Left cardiac atrium (tissue), 4 donors: ENCODE measurements at regions of chr6 and their contacts with region 1.

Region 1: GRCh38 chr6:117194978-117195377 is 70.4 kb upstream of the VGLL2 start:
- DNase-seq: no peak
- ATAC-seq: no peak

Region 2: DNA sequence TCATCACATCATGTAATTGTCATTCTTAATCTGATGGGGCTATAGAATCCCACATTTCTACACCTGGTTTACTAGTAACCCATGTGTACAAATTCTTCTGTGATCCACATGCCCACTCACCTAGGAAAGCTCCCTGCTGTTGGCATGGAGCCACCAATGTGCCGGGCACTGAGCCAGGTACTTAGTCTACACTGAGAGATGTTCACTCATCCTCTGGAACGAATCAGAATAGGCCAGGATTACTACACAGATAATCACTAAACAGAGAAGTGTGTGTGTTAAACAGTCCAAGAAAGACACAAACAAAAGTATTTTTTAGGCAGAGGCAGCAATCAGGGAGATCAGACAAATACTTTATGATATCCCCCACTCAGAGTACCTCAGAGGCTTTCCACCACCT is 122.8 kb before region 1 on chr6:
- intact Hi-C with region 1: loop called in 1 of 2 experiments (anchors 10 kb)
- DNase-seq: peak; percentile 32
- ATAC-seq: peak in 1 of 2 donors; percentile 32

Region 3: GRCh38 chr6:117215353-117216090 is 20.5 kb after region 1 on chr6:
- intact Hi-C with region 1: no loop called
- DNase-seq: no peak
- ATAC-seq: peak in 1 of 2 donors; percentile 78